Activated CD4-positive, alpha-beta T cell treated with anti-CD3 and anti-CD28 coated beads, Interleukin-2, amount 10 ng/mL, durations not matched to agents 24 days and 14 days (primary cell): ENCODE measurements at regions of chr6 and their contacts with region 1.

Region 1: GRCh38 chr6:73879501-73880293 is 183.7 kb downstream of the CD109 start:
- DNase-seq: no peak
- H3K4me3 Mint-ChIP-seq: no peak overlapping the region
- H3K27ac Mint-ChIP-seq: no peak overlapping the region
- H3K4me1 Mint-ChIP-seq: no peaks in the 10 kb centered on the region
- H3K27me3 Mint-ChIP-seq: peaks cover 6% of the 10 kb centered on the region

Region 2: DNA sequence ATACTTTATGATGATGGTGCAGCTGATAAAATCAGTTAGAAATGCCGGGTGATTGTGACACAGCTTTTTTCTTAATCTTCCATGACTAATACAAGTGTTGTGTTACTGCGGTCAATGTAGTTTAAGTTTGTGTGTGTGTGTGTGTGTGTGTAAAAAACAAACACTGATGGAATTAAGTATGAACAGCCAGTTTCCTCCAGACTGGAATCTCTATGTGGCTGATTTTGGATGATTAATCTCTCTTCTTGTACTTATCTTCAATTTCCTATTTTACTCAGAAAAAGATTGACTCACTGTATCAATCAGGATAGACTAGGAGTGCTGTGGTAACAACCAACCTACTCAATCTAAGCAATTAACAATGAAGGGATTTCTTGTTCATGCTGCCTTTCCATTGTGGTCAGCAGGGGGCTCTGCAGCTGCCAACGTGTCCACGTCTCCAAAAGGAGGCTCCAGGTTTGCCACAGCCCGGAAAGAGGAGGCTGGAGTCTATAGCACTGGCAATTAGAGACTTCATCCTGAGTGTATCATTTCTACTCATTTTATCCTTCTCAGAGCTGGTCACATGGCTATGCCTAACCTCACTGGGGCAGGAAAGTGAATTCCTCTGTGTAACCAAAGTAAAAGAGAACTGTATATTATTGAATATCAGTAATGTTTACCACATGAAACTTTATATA is 76.0 kb before region 1 on chr6:
- intact Hi-C with region 1: no loop called
- DNase-seq: peak; percentile 48
- H3K4me3 Mint-ChIP-seq: no peak overlapping the region
- H3K27ac Mint-ChIP-seq: peak overlapping the region; percentile 59
- H3K4me1 Mint-ChIP-seq: peaks cover 11% of the 10 kb centered on the region
- H3K27me3 Mint-ChIP-seq: no peaks in the 10 kb centered on the region

Region 3: DNA sequence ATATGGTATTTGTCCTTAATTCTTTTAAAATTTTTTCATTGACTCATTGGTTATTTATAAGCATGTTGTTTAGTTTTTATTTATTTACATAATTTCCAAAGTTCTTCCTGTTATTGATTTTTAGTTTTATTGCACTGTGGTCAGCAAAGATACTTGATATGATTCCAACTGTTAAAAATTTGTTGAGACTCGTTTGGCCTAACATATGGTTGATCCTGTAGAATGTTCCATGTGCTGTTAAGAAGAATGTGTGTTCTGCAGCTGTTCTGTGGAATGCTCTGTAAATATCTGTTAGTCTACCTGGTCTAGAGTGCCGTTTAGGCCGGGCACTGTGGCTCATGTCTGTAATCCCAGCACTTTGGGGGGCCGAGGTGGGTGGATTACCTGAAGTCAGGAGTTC is 14.0 kb after region 1 on chr6:
- intact Hi-C with region 1: loop called (anchors 1 kb)
- DNase-seq: no peak
- H3K4me3 Mint-ChIP-seq: no peak overlapping the region
- H3K27ac Mint-ChIP-seq: no peak overlapping the region
- H3K4me1 Mint-ChIP-seq: no peaks in the 10 kb centered on the region
- H3K27me3 Mint-ChIP-seq: no peaks in the 10 kb centered on the region

Region 4: GRCh38 chr6:74018825-74019224 is 139.1 kb after region 1 on chr6:
- intact Hi-C with region 1: no loop called
- DNase-seq: no peak
- H3K4me3 Mint-ChIP-seq: no peak overlapping the region
- H3K27ac Mint-ChIP-seq: no peak overlapping the region
- H3K4me1 Mint-ChIP-seq: no peaks in the 10 kb centered on the region
- H3K27me3 Mint-ChIP-seq: no peaks in the 10 kb centered on the region

Region 5: GRCh38 chr6:74057326-74057725 is 177.6 kb after region 1 on chr6:
- intact Hi-C with region 1: no loop called
- DNase-seq: no peak
- H3K4me3 Mint-ChIP-seq: no peak overlapping the region
- H3K27ac Mint-ChIP-seq: no peak overlapping the region
- H3K4me1 Mint-ChIP-seq: no peaks in the 10 kb centered on the region
- H3K27me3 Mint-ChIP-seq: peaks cover 2% of the 10 kb centered on the region